ENCODE measurements at regions of chr20 and their contacts with region 1.

Region 1: DNA sequence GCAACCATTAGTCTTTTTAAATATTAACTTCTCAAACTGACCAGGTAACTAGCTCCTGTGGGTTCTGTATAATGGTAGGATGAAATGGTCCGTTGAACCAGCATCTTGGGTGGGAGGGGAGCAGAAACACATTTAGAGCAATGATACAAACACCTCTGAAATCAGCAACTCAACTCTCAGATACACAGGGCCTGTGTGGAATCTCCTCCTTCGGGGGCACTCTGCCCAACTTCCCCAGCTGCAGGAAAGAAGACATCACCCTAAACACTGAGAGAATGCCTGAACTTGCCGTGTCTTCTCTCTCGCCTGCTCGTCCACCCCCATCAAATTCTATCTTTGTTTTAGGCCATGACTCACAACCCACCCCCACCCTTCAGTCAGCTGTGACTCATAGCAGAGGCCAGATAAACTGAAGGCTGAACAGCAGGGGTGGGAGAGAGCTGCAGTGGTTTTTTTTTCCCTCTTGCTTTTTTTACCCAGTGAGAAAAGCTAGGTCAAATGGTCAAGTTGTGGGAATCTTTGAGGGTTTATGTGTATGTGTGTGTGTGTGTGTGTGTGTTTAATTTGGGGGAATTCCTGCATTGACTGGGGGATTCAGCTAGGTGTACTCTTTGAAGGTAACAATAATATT is 593.4 kb upstream of the JAG1 start:
- DNase-seq: peak; percentile 79
- ATAC-seq: peak; percentile 93
- H3K4me3 ChIP-seq: no peak overlapping the region
- H3K27ac ChIP-seq: peak overlapping the region; percentile 37; the same call in 1 of the 2 replicates
- H3K4me1 ChIP-seq: peaks cover 15% of the 10 kb centered on the region
- H3K27me3 ChIP-seq: no peaks in the 10 kb centered on the region
- CTCF ChIP-seq: no peak
- EP300 ChIP-seq: peak; percentile 71 to 83
- POLR2A ChIP-seq: no peak
- RAD21 ChIP-seq: peak; percentile 45; the same call in 1 of the 2 replicates

Region 2: GRCh38 chr20:10558635-10559187 is 708.5 kb before region 1 on chr20:
- CTCF ChIA-PET with region 1: interaction called, 6 read pairs
- POLR2A ChIA-PET with region 1: no interaction called
- RAD21 ChIA-PET with region 1: interaction called, 6 read pairs
- SMC1A ChIA-PET with region 1: interaction called, 17 read pairs
- in situ Hi-C with region 1: loop called (anchors 5 kb)
- intact Hi-C with region 1: loop called (anchors 2 kb)
- DNase-seq: peak; percentile 84
- ATAC-seq: peak; percentile 98
- H3K4me3 ChIP-seq: no peak overlapping the region
- H3K27ac ChIP-seq: peak overlapping the region; percentile 59
- H3K4me1 ChIP-seq: peaks cover 11% of the 10 kb centered on the region; the same call in 1 of the 2 replicates
- H3K27me3 ChIP-seq: no peaks in the 10 kb centered on the region
- CTCF ChIP-seq: no peak
- EP300 ChIP-seq: peak; percentile 95 to 96; a peak in 3 of 4 replicates
- POLR2A ChIP-seq: no peak
- RAD21 ChIP-seq: no peak

Region 3: DNA sequence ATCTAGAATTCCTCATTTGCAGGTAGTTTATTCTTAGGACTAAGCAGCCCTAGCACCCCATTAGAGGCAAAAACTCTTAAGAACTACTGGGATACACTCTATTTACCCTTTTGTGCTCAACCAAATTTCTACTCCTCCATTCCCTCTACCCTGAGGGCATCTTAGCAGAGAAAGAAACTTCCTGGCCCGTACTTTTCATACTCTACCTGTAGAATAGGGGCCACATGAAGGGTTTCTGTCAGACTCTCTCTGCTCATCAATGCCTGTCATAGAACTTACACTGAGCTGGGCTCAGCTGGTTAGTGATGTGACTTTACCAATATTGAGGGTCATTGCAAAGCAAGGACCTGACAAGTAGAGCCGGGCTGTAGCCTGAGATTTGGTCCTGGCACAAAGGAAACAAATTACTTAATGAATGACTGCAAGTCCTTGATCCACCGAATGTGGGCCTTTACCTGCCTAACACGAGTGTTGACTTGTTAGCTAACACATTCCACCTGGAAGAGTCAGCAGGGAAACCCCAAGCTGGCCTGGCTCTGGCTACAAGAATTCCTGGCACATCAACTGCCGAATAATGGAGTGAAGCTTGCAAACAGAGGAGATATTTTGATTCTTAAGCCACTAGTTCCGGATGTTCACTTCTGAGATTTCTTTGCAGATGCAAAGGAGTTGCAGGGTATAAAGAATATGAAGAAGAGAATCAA is 313.0 kb before region 1 on chr20:
- CTCF ChIA-PET with region 1: no interaction called
- POLR2A ChIA-PET with region 1: no interaction called
- RAD21 ChIA-PET with region 1: no interaction called
- SMC1A ChIA-PET with region 1: no interaction called
- in situ Hi-C with region 1: no loop called
- intact Hi-C with region 1: no loop called
- DNase-seq: no peak
- ATAC-seq: no peak
- H3K4me3 ChIP-seq: no peak overlapping the region
- H3K27ac ChIP-seq: no peak overlapping the region
- H3K4me1 ChIP-seq: no peaks in the 10 kb centered on the region
- H3K27me3 ChIP-seq: no peaks in the 10 kb centered on the region
- CTCF ChIP-seq: no peak
- EP300 ChIP-seq: no peak
- POLR2A ChIP-seq: no peak
- RAD21 ChIP-seq: no peak

Region 4: DNA sequence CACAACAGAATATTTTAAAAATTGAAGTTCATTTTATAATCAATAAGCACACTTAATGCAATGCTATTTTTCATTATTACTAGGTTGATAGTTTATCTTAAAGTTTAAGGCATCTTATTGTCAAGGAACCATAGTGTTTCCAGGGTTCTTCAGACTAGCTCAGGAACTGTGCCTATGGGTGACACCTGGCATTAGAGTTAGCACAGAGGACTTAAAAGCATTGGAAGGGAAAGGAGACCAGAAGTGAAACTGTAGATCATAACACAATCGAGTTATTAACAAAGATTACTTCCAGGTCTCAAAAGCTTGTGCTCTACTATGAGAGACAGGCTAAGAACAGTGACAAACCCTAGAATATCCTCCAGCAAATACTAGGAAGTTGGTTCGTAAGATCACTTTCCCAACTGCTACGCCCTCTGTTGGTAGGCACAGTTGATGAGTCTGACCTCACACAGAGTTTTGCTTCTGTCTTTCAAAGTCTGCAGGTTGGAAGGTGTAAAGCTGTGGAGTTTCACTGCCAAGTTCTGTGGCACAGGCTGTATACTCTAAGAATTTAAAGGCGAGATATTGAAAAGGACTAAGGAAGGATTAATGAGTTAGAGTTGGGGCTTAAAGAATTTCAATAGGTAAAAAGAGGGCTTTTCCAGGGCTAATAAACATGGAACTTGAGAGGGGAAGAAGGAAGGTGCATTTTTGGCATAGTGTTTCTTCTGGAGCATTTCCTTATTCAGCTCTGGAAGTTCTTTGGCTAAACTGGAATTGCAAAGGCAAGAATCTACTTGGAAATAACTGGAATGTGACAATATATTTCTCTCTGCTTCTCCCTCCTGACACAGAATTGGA is 62.1 kb before region 1 on chr20:
- CTCF ChIA-PET with region 1: interaction called, 21 read pairs
- POLR2A ChIA-PET with region 1: no interaction called
- RAD21 ChIA-PET with region 1: interaction called, 29 read pairs
- SMC1A ChIA-PET with region 1: interaction called, 51 read pairs
- in situ Hi-C with region 1: no loop called
- intact Hi-C with region 1: loop called (anchors 2 kb)
- DNase-seq: peak; percentile 50
- ATAC-seq: peak; percentile 99
- H3K4me3 ChIP-seq: no peak overlapping the region
- H3K27ac ChIP-seq: no peak overlapping the region
- H3K4me1 ChIP-seq: no peaks in the 10 kb centered on the region
- H3K27me3 ChIP-seq: no peaks in the 10 kb centered on the region; a peak in 1 of 4 replicates
- CTCF ChIP-seq: peak; percentile 80 to 89 (median 84)
- EP300 ChIP-seq: no peak
- POLR2A ChIP-seq: no peak
- RAD21 ChIP-seq: peak; percentile 81

Region 5: DNA sequence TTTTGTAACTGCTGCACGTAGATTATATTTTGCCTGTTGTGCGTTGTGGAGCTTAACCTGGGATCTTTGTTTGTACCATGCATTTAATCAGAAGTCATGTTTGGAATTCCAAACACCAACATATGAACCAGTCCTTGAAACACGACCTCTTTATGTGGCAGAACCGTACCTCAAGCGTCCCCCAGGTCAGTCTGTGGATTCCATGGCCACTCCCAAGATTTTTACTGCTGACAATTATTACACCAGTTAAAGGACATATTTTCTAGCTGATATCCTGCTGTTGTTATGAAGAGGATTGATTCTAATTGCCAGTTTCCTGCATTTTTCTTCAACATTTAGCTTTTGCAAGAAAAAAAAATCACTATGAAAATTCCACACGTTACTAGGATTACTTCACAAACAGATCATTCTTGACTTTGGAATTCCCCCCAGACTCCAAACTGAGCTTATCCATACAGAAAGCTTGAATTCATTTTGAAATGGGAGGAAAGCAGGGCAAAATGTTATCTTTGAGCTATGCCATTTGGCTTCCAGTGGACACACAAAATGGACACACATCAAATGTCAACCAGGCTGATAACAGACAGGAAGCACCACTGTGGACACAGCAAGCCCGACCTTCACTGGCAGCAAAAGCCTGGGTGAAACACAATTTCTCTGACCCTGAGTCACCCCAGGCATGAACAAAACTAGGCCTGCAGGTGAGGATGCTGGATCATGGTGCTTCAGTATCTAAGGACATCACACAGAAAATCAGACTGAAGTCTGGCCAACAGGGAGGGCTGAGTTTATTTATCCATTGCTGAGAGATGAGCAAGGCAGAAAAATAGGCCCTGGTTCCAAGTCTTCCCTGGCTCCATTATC is 50.6 kb before region 1 on chr20:
- CTCF ChIA-PET with region 1: interaction called, 16 read pairs
- POLR2A ChIA-PET with region 1: interaction called, 4 read pairs
- RAD21 ChIA-PET with region 1: interaction called, 39 read pairs
- SMC1A ChIA-PET with region 1: interaction called, 57 read pairs
- in situ Hi-C with region 1: no loop called
- intact Hi-C with region 1: no loop called
- DNase-seq: no peak
- ATAC-seq: no peak; the same call in 2 of the 3 replicates
- H3K4me3 ChIP-seq: no peak overlapping the region
- H3K27ac ChIP-seq: no peak overlapping the region
- H3K4me1 ChIP-seq: peaks cover 13% of the 10 kb centered on the region
- H3K27me3 ChIP-seq: no peaks in the 10 kb centered on the region
- CTCF ChIP-seq: no peak
- EP300 ChIP-seq: no peak
- POLR2A ChIP-seq: no peak
- RAD21 ChIP-seq: no peak

Region 6: GRCh38 chr20:11235058-11235457 is 32.2 kb before region 1 on chr20:
- CTCF ChIA-PET with region 1: interaction called, 4 read pairs
- POLR2A ChIA-PET with region 1: interaction called, 3 read pairs
- RAD21 ChIA-PET with region 1: interaction called, 13 read pairs
- SMC1A ChIA-PET with region 1: interaction called, 16 read pairs
- in situ Hi-C with region 1: no loop called
- intact Hi-C with region 1: no loop called
- DNase-seq: no peak
- ATAC-seq: peak; percentile 30
- H3K4me3 ChIP-seq: no peak overlapping the region
- H3K27ac ChIP-seq: peak overlapping the region; percentile 32; the same call in 1 of the 2 replicates
- H3K4me1 ChIP-seq: peaks cover 15% of the 10 kb centered on the region
- H3K27me3 ChIP-seq: no peaks in the 10 kb centered on the region
- CTCF ChIP-seq: no peak
- EP300 ChIP-seq: no peak
- POLR2A ChIP-seq: no peak
- RAD21 ChIP-seq: no peak

Region 7: DNA sequence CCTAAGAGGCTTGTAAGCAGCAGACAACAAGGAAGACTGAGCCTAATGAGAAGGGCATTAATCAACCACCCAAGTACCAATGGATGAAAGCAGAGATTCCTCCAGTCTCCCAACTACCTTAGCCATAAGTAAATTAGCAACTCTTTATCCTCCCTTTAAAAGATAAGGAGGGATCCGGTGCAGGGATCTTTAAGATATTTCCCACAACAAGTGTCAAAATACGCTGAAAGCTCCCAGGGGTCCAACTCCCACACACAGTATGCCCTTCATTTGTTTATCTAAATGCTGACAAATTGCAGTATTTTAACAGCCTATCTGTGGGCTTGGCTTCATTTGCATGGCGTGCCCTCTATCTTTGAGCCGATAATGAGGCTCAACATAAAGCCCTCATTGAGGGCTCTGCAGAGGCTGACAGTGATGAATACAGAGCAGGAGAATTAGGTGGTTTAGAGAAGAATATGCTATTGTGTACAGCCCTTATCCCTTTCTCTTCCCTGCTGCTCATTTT is 18.5 kb before region 1 on chr20:
- CTCF ChIA-PET with region 1: interaction called, 42 read pairs
- POLR2A ChIA-PET with region 1: interaction called, 9 read pairs
- RAD21 ChIA-PET with region 1: interaction called, 22 read pairs
- SMC1A ChIA-PET with region 1: interaction called, 35 read pairs
- in situ Hi-C with region 1: no loop called
- intact Hi-C with region 1: no loop called
- DNase-seq: no peak
- ATAC-seq: peak; percentile 52
- H3K4me3 ChIP-seq: no peak overlapping the region
- H3K27ac ChIP-seq: no peak overlapping the region
- H3K4me1 ChIP-seq: no peaks in the 10 kb centered on the region
- H3K27me3 ChIP-seq: no peaks in the 10 kb centered on the region; a peak in 2 of 4 replicates
- CTCF ChIP-seq: no peak
- EP300 ChIP-seq: no peak
- POLR2A ChIP-seq: no peak
- RAD21 ChIP-seq: no peak

Measured in GM12878 (cell line).